Activated CD4-positive, alpha-beta T cell treated with anti-CD3 and anti-CD28 coated beads, Interleukin-2, amount 10 ng/mL, durations not matched to agents 7 days and 5 days (primary cell): ENCODE measurements at regions of chr22 and their contacts with region 1.

Region 1: DNA sequence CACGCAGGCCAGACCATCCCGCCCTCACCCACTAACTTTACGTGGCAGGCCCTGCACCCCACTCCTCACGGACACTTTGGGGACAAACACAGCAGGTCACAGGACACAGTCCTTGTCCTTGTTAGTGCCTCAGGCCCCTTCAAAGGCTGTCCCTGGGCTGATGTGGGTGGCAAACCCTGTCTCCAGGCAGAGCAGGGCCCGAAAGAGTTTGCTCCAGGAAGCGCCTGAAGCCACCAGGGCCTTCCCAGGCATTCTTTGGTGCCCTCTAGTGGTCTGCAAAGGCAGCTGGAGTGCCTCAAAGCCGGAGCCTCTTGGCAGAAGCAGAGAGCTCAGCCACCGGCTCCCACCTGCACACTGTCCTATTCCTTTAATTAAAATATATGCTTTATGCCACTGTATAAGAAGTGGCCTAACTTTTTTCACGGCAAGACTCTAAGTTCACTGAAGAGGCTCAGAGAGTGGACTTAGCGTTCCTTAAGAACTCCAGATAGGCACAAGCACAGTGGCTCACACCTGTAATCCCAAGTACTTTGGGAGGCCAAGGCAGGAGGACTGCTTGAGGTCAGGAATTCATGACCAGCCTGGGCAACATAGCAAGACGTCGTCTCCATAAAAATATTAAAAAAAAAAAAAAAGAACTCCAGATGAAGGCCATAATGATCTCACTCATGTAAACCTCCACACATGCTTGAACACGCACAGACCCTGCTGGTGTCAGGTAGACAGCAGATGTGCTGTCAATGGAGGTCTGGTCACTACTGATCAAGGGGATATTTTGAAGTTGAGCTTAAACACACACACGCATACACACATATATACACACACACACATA is 11.1 kb downstream of the TXN2 start:
- DNase-seq: peak; percentile 91
- H3K4me3 Mint-ChIP-seq: no peak overlapping the region
- H3K27ac Mint-ChIP-seq: peak overlapping the region; percentile 74
- H3K4me1 Mint-ChIP-seq: peaks cover 44% of the 10 kb centered on the region
- H3K27me3 Mint-ChIP-seq: no peaks in the 10 kb centered on the region

Region 2: GRCh38 chr22:36331306-36331911 is 139.0 kb before region 1 on chr22:
- CTCF ChIA-PET with region 1: interaction called, 12 read pairs
- POLR2A ChIA-PET with region 1: no interaction called
- DNase-seq: peak; percentile 87
- H3K4me3 Mint-ChIP-seq: peak overlapping the region; percentile 86
- H3K27ac Mint-ChIP-seq: peak overlapping the region; percentile 99
- H3K4me1 Mint-ChIP-seq: peaks cover 98% of the 10 kb centered on the region
- H3K27me3 Mint-ChIP-seq: no peaks in the 10 kb centered on the region

Region 3: DNA sequence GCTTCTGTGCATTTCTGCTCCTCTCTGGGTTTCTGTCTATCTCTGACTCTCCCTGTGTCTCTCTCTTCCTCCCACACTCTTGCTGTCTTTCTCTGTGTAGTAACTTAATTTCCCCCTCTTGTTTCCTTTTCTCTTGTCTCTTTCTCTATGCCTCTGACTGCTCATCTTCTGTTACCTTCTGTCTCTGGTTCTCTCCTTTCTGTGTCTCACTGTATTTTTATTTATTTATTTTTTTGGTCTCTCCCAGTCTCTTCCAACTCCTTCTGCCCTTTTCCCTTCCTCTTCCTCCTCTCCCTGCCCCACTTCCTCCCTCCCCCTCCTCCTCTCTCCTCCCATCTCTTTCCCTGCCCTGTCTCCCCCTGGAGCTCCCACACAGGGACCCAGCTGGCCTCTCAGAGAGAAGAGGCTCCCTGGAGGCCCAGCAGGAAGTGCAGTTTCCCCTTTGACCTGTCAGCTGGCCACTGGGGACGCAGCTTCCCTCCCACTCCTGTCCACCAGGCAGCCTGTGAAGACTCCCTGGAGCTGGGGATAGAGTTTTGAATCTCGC is 44.3 kb before region 1 on chr22:
- CTCF ChIA-PET with region 1: no interaction called
- POLR2A ChIA-PET with region 1: no interaction called
- DNase-seq: no peak
- H3K4me3 Mint-ChIP-seq: no peak overlapping the region
- H3K27ac Mint-ChIP-seq: peak overlapping the region; percentile 66
- H3K4me1 Mint-ChIP-seq: peaks cover 37% of the 10 kb centered on the region
- H3K27me3 Mint-ChIP-seq: no peaks in the 10 kb centered on the region

Region 4: GRCh38 chr22:36454916-36455570 is 15.3 kb before region 1 on chr22:
- CTCF ChIA-PET with region 1: interaction called, 11 read pairs
- POLR2A ChIA-PET with region 1: no interaction called
- DNase-seq: peak; percentile 96
- H3K4me3 Mint-ChIP-seq: peak overlapping the region; percentile 75
- H3K27ac Mint-ChIP-seq: peak overlapping the region; percentile 90
- H3K4me1 Mint-ChIP-seq: peaks cover 59% of the 10 kb centered on the region
- H3K27me3 Mint-ChIP-seq: no peaks in the 10 kb centered on the region

Region 5: DNA sequence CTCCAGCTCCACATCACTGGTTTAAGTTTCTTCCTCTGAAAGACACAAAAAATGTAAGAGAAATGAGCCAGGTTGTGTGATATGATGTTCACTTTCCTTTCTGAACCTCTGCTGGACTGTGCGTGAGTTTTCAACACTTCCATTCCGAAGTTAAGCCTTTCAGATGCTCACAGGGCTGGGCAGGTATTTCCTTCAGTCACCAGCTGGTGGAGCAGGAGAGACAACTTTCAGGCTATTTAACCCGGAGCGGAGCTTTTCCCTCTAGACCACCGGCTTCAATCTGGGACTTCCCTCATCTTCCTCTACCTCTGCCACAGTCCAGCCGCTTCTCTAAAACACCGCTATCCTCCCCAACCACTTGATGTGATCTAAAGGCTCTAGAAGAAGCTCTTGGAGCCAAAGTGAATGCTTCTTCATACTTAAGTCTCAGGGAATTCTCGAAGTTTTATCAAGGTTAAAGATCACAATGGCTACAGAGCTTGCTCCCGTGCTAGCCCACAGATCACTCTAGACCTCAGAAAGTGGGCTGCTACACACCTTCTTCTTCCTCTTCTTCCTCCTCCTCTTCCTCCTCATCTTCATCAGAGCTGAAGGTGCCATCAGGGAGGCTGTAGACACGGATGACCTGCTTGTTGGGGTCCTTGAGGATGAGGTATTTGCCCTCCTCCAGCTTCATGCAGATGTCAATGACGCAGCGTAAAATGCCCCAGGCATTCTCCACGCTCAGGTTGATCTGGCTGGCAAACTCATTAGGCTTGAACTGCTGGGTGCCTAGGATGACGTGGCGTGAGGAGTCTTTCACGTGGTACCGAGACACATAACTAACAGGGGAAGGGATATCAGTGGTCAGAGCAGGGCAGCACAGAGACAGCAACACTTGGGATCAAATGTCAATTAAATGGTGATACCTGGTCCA is 40.8 kb after region 1 on chr22:
- CTCF ChIA-PET with region 1: no interaction called
- POLR2A ChIA-PET with region 1: no interaction called
- DNase-seq: peak; percentile 50
- H3K4me3 Mint-ChIP-seq: no peak overlapping the region
- H3K27ac Mint-ChIP-seq: peak overlapping the region; percentile 22
- H3K4me1 Mint-ChIP-seq: peaks cover 14% of the 10 kb centered on the region
- H3K27me3 Mint-ChIP-seq: no peaks in the 10 kb centered on the region

Region 6: GRCh38 chr22:36606114-36606513 is 135.7 kb after region 1 on chr22:
- CTCF ChIA-PET with region 1: no interaction called
- POLR2A ChIA-PET with region 1: no interaction called
- DNase-seq: no peak
- H3K4me3 Mint-ChIP-seq: no peak overlapping the region
- H3K27ac Mint-ChIP-seq: no peak overlapping the region
- H3K4me1 Mint-ChIP-seq: no peaks in the 10 kb centered on the region
- H3K27me3 Mint-ChIP-seq: peaks cover 20% of the 10 kb centered on the region

Region 7: DNA sequence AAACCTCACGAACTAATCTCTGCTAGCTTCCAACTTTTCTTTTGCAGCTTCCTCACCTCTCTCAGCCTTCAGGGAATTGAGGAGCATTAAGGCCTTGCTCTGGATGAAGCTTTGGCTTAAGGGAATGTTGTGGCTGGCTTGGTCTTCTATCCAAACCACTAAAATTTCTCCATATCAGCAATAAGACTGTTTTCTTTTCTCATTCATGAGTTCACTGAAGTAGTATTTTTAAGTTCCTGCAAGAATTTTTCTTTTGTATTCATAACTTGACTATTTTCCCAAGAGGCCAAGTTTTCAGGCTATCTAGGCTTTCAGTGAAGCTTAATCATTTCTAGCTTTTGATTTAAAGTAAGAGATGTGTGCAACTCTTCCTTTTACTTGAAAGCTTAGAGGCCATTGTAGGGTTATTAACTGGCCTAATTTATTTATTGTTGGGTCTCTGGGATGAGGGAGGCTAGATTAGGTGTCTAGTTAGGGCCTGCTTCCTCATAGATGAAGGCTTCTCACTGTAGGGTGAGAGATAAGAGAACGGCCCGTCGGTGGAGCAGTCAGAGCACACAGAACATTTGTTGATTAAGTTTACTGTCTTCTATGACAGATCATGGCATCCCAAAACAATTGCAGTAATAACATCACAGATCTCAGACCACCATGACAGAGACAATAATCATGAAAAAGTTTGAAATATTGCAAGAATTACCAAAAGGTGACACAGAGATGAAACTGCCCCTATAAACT is 476.2 kb after region 1 on chr22:
- CTCF ChIA-PET with region 1: no interaction called
- POLR2A ChIA-PET with region 1: no interaction called
- DNase-seq: no peak
- H3K4me3 Mint-ChIP-seq: no peak overlapping the region
- H3K27ac Mint-ChIP-seq: no peak overlapping the region
- H3K4me1 Mint-ChIP-seq: no peaks in the 10 kb centered on the region
- H3K27me3 Mint-ChIP-seq: peaks cover 14% of the 10 kb centered on the region